Activated CD4-positive, alpha-beta T cell treated with anti-CD3 and anti-CD28 coated beads, Interleukin-2, amount 10 ng/mL, durations not matched to agents 7 days and 5 days (primary cell): ENCODE measurements at regions of chr1 and their contacts with region 1.

Region 1: DNA sequence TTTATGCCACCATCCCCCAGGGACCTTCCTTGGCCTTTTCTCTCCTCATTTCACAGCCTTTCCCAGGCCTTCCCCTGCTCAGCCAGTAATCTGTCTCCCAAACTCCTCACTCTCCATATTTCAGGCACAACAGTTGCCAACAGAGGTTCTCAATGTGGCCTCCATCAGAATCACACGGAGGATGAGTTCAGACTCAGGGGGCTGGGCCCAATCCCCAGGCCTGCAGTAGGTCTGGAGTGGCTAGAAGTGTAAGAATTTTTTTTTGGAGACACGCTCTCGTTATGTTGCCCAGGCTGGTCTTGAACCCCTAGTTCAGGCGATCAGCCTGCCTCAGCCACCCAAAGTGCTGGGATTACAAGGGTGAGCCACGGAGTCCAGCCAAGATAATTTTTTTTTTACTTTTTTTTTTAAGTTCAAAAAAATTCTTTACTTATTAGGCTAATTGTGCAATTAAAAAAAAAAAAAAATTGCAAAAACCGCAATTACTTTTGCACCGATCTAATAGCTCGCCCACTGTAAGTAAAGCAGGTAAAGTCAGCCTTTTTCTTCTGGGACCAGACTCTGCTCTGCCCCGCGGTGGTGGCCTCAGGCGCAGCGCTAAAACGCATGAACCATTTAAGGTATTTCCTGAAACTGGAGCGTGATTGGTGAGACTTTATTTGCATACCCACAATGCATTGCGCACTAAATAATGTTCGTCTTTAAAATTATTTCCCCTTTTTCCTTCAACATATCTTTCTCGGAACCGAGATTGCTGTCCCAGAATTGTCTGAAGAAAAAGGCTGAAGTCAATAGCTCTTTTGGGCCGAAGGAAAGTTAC is 18.7 kb downstream of the KIAA2013 start:
- DNase-seq: peak; percentile 94
- H3K4me3 Mint-ChIP-seq: peak overlapping the region; percentile 81
- H3K27ac Mint-ChIP-seq: peak overlapping the region; percentile 99
- H3K4me1 Mint-ChIP-seq: peaks cover 45% of the 10 kb centered on the region
- H3K27me3 Mint-ChIP-seq: peaks cover 23% of the 10 kb centered on the region

Region 2: DNA sequence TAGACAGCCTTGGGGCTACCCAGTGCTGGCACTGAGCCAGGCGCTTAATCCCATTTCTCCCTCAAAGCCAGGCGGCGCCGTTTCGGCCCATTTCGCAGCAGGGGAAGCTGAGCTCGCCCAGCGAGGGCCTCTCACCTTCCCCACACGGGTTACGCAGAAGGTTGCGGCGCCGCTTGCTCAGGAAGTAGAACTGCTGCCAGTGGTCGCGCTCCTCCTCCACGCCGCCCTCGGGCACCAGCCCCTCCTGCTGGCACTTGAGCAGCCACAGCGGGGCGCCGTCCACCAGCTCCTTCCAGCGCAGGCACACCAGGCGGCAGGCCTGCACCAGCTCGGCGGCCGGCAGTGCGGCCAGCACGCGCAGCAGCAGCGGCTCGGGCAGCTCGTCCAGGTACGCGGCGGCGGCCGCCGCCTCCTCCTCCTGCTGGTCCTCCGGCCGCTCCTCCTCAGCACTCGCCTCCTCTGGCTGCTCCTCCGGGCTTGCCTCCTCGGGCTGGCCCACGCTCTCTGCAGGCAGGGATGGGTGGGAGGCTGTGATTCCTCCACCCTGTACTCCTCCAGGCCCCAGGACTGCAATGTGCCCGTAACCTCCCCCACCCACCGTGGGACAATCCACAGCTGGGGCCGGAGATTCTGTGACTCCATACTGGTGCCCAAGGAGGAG is 257.0 kb before region 1 on chr1:
- CTCF ChIA-PET with region 1: no interaction called
- POLR2A ChIA-PET with region 1: no interaction called
- DNase-seq: peak; percentile 87
- H3K4me3 Mint-ChIP-seq: peak overlapping the region; percentile 60
- H3K27ac Mint-ChIP-seq: peak overlapping the region; percentile 13
- H3K4me1 Mint-ChIP-seq: peaks cover 25% of the 10 kb centered on the region
- H3K27me3 Mint-ChIP-seq: peaks cover 14% of the 10 kb centered on the region

Region 3: DNA sequence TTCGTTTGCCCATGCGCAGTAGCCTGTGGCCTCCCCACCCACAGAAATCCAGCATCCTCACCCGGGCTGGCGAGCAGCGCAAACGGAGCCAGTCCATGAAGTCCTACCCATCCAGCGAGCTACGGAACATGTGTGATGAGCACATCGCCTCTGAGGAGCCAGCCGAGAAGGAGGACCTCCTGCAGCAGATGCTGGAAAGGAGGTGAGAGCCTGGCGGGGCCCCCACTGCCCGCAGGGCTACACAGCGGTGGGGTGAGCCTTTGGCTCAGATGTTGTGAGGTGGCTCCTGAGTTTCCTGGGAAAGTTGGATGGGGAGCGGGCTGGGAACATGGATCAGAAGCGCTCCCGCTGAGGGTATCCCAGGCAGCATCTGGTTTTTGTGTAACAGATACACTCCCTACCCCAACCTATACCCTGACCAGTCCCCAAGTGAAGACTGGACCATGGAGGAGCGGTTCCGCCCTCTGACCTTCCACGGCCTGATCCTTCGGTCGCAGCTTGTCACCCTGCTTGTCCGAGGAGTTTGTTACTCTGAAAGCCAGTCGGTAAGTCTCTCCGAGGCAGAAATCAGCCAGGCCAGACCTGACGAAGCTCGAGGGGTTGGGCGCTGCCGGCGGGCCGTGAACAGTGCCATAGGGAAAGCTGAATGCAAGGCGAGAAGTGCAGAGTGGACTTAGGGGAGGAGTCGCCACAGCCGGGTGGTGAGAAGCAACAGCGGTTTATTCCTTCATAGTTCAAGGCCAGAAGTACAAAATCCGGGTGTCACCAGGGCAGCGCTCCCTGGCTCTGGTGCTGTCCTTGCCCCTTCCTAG is 70.3 kb before region 1 on chr1:
- CTCF ChIA-PET with region 1: interaction called, 7 read pairs
- POLR2A ChIA-PET with region 1: interaction called, 13 read pairs
- DNase-seq: no peak
- H3K4me3 Mint-ChIP-seq: no peak overlapping the region
- H3K27ac Mint-ChIP-seq: no peak overlapping the region
- H3K4me1 Mint-ChIP-seq: peaks cover 2% of the 10 kb centered on the region
- H3K27me3 Mint-ChIP-seq: no peaks in the 10 kb centered on the region

Region 4: GRCh38 chr1:11918779-11919519 is 11.5 kb after region 1 on chr1:
- CTCF ChIA-PET with region 1: interaction called, 17 read pairs
- POLR2A ChIA-PET with region 1: interaction called, 6 read pairs
- DNase-seq: no peak
- H3K4me3 Mint-ChIP-seq: no peak overlapping the region
- H3K27ac Mint-ChIP-seq: no peak overlapping the region
- H3K4me1 Mint-ChIP-seq: peaks cover 19% of the 10 kb centered on the region
- H3K27me3 Mint-ChIP-seq: no peaks in the 10 kb centered on the region

Region 5: DNA sequence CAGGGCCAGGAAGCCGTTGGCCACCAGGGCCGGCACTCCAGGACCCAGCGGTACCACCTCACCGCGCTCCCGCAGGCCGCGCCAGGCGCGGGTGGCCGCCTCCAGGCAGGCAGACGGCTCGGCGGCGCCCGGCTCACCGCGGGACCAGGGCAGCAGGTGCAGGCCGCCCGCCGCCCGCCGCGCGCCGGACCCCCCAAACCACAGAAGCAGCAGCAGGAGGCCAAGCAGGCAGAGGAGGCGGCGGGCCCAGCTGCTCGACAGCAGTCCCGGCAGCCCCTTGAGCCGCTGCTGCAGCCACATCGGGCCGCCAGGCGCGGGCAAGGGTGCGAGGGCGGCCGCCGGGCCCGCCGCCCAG is 18.4 kb after region 1 on chr1:
- CTCF ChIA-PET with region 1: interaction called, 4 read pairs
- POLR2A ChIA-PET with region 1: interaction called, 12 read pairs
- DNase-seq: peak; percentile 30
- H3K4me3 Mint-ChIP-seq: no peak overlapping the region
- H3K27ac Mint-ChIP-seq: no peak overlapping the region
- H3K4me1 Mint-ChIP-seq: peaks cover 35% of the 10 kb centered on the region
- H3K27me3 Mint-ChIP-seq: no peaks in the 10 kb centered on the region

Region 6: DNA sequence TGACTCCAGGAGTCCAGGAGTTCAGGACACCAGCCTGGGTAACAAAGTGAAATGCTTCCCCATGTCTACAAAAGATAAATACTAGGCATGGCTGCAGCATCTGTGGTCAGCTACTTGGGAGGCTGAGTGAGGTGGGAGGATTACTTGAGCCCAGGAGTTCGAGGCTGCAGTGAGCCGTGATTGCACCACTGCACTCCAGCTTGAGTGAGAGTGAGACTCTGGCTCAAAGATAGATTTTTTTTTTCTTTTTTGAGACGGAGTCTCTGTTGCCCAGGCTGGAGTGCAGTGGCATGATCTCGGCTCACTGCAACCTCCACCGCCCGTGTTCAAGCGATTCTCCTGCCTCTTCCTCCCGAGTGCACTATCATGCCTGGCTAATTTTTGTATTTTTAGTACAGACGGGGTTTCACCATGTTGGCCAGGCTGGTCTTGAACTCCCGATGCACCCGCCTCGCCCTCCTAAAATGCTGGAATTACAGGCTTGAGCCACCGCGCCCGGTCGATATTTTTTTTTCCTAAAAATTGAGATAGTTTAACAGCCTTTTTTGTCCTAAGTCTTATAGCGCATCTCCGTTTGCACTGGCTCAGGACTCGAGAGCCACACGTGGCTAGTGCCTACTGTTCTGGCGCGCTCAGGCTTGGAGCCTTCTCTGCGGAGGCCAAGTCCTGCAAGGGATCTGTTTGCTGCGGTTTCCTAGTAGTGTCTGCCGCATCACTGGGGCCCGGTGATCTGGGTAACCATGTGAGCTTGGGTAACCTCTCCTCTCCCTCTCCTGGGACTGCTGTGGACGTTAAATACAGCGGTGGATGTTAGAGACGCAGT is 71.8 kb after region 1 on chr1:
- CTCF ChIA-PET with region 1: interaction called, 3 read pairs
- POLR2A ChIA-PET with region 1: interaction called, 15 read pairs
- DNase-seq: no peak
- H3K4me3 Mint-ChIP-seq: peak overlapping the region; percentile 97
- H3K27ac Mint-ChIP-seq: peak overlapping the region; percentile 92
- H3K4me1 Mint-ChIP-seq: peaks cover 42% of the 10 kb centered on the region
- H3K27me3 Mint-ChIP-seq: no peaks in the 10 kb centered on the region